HCT116 (cell line): ENCODE measurements at regions of chr5 and their contacts with region 1.

Region 1: GRCh38 chr5:157130925-157131324 is 11.7 kb downstream of the MED7 start:
- DNase-seq: no peak
- ATAC-seq: no peak
- H3K4me3 ChIP-seq: no peak overlapping the region
- H3K27ac ChIP-seq: no peak overlapping the region
- H3K4me1 ChIP-seq: peaks cover 0 to 4% of the 10 kb centered on the region in 2 experiments; a peak in 1 of 4 replicates
- H3K27me3 ChIP-seq: no peaks in the 10 kb centered on the region
- CTCF ChIP-seq: no peak
- POLR2A ChIP-seq: no peak
- RAD21 ChIP-seq: no peak

Region 2: DNA sequence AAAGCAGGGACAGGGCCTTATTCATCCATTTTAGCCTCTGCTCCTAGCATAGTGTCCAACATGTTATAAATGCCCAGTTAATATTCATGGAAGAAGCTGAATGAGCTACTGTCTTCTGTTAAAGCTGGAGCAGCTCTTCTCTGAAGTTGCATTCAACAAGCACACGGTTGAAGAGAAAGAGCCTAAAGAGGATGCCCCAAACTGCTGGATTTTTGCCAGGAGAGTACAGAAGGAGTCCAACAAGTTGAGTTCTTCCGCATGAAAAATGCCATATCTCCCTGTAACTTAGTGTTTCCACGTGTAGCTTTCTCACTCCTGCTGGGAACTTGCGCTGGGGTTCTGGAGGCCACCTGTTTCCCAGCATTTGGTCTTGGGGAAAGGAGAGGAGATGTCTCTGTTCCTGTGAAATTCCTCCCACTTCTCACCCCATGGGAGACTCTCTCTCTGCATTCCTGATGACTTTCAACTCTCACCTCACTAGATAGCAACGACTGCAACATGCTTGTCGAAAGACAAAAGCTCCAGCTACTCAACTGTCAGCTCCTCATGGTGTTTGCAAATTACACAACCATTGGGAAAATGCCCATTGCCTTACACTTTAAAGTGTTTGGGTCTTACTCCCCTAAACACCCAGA is 1994.6 kb before region 1 on chr5:
- CTCF ChIA-PET with region 1: interaction called, 12 read pairs
- POLR2A ChIA-PET with region 1: no interaction called
- RAD21 ChIA-PET with region 1: no interaction called
- intact Hi-C with region 1: loop called (anchors 1 kb)
- DNase-seq: no peak
- ATAC-seq: no peak
- H3K4me3 ChIP-seq: no peak overlapping the region
- H3K27ac ChIP-seq: no peak overlapping the region
- H3K4me1 ChIP-seq: no peaks in the 10 kb centered on the region; a peak in 1 of 4 replicates
- H3K27me3 ChIP-seq: peaks cover 47% of the 10 kb centered on the region
- CTCF ChIP-seq: no peak
- POLR2A ChIP-seq: no peak
- RAD21 ChIP-seq: no peak

Region 3: GRCh38 chr5:155616779-155617392 is 1514.0 kb before region 1 on chr5:
- CTCF ChIA-PET with region 1: interaction called, 5 read pairs
- POLR2A ChIA-PET with region 1: no interaction called
- RAD21 ChIA-PET with region 1: no interaction called
- intact Hi-C with region 1: loop called (anchors 2 kb)
- DNase-seq: no peak
- ATAC-seq: no peak; the same call in 1 of the 2 replicates
- H3K4me3 ChIP-seq: no peak overlapping the region
- H3K27ac ChIP-seq: no peak overlapping the region
- H3K4me1 ChIP-seq: no peaks in the 10 kb centered on the region
- H3K27me3 ChIP-seq: no peaks in the 10 kb centered on the region
- CTCF ChIP-seq: peak; percentile 11 to 66 (median 65); a peak in 5 of 6 replicates
- POLR2A ChIP-seq: no peak
- RAD21 ChIP-seq: peak; percentile 60

Region 4: DNA sequence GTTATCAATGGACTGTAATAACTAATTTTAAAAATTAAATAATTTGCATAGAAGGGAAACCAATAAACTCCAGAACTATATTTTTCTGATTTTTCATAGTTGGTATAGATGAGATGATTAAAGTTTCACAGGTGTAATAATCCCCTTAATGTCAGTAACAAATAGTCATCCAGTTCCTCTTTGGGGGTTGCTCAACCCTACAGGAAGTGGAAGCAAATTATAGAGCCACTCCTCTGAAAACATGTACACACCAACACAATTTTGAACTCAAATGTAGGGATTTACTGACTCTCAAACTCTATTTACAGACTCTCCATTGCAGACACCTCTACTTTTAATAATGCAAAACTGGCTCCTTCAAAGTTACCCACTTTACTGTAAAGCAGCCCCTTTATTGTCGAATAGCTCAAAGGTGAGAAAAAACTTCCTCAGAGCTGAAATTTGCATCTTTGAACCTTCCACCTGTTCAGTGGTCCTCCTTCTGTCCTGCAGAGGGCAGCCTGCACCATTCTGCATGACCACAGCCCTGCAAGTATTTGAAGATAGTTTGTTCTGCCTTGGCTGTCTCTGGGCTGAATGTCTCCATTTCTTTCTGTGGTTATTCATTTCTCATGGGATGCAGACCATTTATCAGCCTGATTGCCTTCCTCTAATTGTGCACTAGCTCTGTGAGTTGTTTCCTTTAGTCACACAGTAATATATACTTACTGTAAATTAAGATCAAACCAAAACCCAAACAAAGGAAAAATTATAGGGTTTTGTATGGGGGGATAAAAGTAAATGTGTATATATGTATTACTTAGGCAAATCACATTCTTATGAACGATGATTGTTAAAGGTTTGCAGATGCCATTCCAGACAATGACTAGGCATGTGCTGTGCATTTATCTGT is 1187.2 kb before region 1 on chr5:
- CTCF ChIA-PET with region 1: no interaction called
- POLR2A ChIA-PET with region 1: no interaction called
- RAD21 ChIA-PET with region 1: no interaction called
- intact Hi-C with region 1: loop called (anchors 2 kb)
- DNase-seq: no peak
- ATAC-seq: no peak
- H3K4me3 ChIP-seq: no peak overlapping the region
- H3K27ac ChIP-seq: no peak overlapping the region
- H3K4me1 ChIP-seq: no peaks in the 10 kb centered on the region
- H3K27me3 ChIP-seq: no peaks in the 10 kb centered on the region
- CTCF ChIP-seq: peak in 2 of 3 experiments; percentile 34 to 50; a peak in 2 of 6 replicates
- POLR2A ChIP-seq: no peak
- RAD21 ChIP-seq: peak; percentile 31; the same call in 1 of the 2 replicates

Region 5: DNA sequence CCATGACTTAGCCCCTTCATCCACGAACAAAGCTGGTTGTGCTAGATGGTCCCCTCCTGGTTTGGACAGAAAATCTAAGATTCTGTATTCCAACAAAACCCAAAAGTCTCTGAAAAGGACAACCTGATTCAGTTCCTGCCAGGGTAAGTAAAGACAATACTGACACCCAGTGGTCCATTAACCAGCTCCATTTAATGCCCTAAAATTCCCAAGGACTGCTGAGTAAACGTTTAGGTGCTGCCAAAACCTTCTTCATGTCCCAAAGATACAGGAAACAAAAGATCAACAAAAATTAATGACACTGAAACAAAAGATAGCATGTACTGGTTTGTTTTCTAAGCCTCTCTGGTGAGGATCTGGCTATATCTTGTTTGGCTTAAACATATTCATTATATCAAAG is 306.1 kb before region 1 on chr5:
- CTCF ChIA-PET with region 1: interaction called, 11 read pairs
- POLR2A ChIA-PET with region 1: no interaction called
- RAD21 ChIA-PET with region 1: no interaction called
- intact Hi-C with region 1: no loop called
- DNase-seq: peak; percentile 21
- ATAC-seq: no peak; the same call in 1 of the 2 replicates
- H3K4me3 ChIP-seq: no peak overlapping the region
- H3K27ac ChIP-seq: no peak overlapping the region
- H3K4me1 ChIP-seq: no peaks in the 10 kb centered on the region
- H3K27me3 ChIP-seq: 0 out of 2 replicates have a peak, but pooled peaks cover 4% of the 10 kb centered on the region
- CTCF ChIP-seq: peak in 2 of 3 experiments; percentile 6 to 45; a peak in 1 of 6 replicates
- POLR2A ChIP-seq: no peak
- RAD21 ChIP-seq: peak; percentile 51

Region 6: DNA sequence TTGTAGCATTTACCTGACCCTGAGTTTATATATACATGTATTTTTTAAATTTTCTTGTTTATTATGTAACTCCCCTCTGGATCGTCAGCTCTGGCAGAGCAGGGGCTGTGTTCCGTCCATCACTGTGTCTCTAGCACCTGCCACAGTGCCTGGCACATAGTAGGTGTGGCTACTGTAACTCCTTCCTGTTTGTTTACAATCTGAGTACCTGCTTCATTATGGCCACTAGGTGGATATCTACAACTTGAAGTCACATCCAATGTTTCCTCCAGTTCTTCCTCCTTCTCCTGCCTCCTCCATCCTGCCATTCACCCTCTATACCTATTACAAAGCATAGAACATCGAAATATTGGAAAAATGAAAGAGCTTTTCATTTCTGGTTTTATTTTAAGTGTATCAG is 295.0 kb before region 1 on chr5:
- CTCF ChIA-PET with region 1: interaction called, 10 read pairs
- POLR2A ChIA-PET with region 1: no interaction called
- RAD21 ChIA-PET with region 1: no interaction called
- intact Hi-C with region 1: loop called (anchors 5 kb)
- DNase-seq: peak; percentile 10
- ATAC-seq: peak; percentile 65
- H3K4me3 ChIP-seq: no peak overlapping the region
- H3K27ac ChIP-seq: no peak overlapping the region
- H3K4me1 ChIP-seq: no peaks in the 10 kb centered on the region
- H3K27me3 ChIP-seq: no peaks in the 10 kb centered on the region
- CTCF ChIP-seq: peak; percentile 13 to 49 (median 34); a peak in 4 of 6 replicates
- POLR2A ChIP-seq: no peak
- RAD21 ChIP-seq: peak; percentile 43

Region 7: GRCh38 chr5:156951359-156951758 is 179.6 kb before region 1 on chr5:
- CTCF ChIA-PET with region 1: no interaction called
- POLR2A ChIA-PET with region 1: no interaction called
- RAD21 ChIA-PET with region 1: no interaction called
- intact Hi-C with region 1: no loop called
- DNase-seq: no peak
- ATAC-seq: no peak
- H3K4me3 ChIP-seq: no peak overlapping the region
- H3K27ac ChIP-seq: no peak overlapping the region
- H3K4me1 ChIP-seq: no peaks in the 10 kb centered on the region
- H3K27me3 ChIP-seq: peaks cover 3% of the 10 kb centered on the region; the same call in 1 of the 2 replicates
- CTCF ChIP-seq: no peak
- POLR2A ChIP-seq: no peak
- RAD21 ChIP-seq: no peak

Region 8: DNA sequence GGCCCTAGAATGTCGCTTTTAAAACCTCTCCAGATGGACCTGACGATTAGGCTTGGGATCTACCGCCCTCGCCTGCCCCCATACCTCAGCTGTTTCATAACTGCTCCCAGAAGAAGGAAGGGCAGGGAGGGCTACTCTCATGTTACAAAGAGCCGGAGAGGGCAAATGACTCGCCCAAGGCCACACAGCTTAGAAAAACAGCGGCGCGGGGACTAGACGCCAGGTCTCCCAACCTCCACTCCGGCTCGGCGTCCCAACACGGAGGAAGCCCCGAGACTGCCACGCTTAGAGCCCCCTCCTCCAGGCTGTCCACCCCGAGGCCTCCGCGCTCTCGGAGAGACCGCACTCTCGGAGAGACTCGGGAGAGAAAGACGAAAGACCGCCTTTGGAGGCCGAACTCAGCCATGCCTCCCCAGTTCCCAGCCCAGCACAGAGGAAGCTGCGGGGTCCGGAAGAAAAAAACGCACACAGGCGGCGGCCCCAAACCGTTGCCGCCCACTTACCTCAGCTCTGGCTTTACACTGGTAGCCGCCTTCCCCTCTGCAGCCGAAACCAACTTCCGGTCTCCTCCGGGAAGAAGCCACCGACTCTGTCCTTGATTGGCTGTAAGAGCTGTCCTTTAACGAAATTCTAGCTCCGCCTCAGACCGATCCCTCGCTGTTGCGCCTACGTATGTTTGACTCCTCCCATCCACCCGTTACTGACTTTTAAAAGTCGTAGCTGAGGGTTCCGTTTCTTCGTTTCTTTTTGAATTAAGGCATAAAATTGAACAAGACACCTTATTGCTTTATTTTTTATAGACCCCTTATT is 11.6 kb after region 1 on chr5 and contains the start of gene MED7:
- CTCF ChIA-PET with region 1: interaction called, 14 read pairs
- POLR2A ChIA-PET with region 1: interaction called, 7 read pairs
- RAD21 ChIA-PET with region 1: no interaction called
- intact Hi-C with region 1: no loop called
- DNase-seq: peak; percentile 99
- ATAC-seq: peak; percentile 99
- H3K4me3 ChIP-seq: peak within 1 kb of the TSS; percentile 94 to 95
- H3K27ac ChIP-seq: peak within 1 kb of the TSS; percentile 73
- H3K4me1 ChIP-seq: peaks cover 5 to 13% of the 10 kb centered on the region in 2 experiments; a peak in 3 of 4 replicates
- H3K27me3 ChIP-seq: no peaks in the 10 kb centered on the region
- CTCF ChIP-seq: no peak
- POLR2A ChIP-seq: peak; percentile 87
- RAD21 ChIP-seq: no peak
- total RNA-seq, gene MED7: 9.1 TPM